ENCODE measurements at regions of chr6 and their contacts with region 1.

Region 1: GRCh38 chr6:132279592-132280139 is 121.6 kb downstream of the MOXD1 start:
- DNase-seq: peak; percentile 77
- H3K4me3 Mint-ChIP-seq: peak overlapping the region; percentile 71
- H3K27ac Mint-ChIP-seq: no peak overlapping the region
- H3K4me1 Mint-ChIP-seq: no peaks in the 10 kb centered on the region
- H3K27me3 Mint-ChIP-seq: no peaks in the 10 kb centered on the region
- CTCF ChIP-seq: peak; percentile 76

Region 2: DNA sequence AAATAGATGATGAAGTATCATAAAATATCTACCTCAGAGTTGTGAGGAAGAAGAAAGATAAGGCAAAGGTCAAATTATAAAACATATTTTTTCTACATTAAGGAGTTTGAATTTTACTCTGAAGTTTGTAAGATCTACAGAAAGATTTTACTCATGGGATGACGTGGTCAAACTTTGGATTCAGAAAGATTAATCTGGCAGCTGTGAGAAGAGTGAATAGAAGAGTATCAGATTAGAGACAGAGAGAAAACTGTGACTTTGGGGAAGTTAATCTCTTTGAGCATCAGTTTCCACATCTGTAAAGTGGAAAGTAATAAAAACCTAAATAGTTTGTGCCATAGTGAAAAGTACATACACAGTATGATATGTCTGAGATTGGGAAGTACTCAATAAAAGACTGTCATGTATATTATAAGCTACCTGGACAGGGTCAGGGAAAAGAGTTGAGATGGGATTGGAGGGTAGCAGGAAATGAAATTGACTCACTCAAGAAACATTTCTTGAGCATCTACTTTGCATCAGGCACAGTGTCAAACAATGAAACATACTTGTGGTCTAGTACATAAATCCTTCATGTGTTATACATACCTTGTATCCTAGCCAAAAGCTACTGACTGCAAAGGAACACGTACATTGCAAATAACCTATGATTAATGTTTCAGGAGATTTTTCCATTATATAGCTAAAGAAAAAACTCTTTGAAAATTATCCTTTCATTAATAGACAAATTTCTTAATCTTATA is 1691.7 kb before region 1 on chr6:
- CTCF ChIA-PET with region 1: no interaction called
- POLR2A ChIA-PET with region 1: no interaction called
- intact Hi-C with region 1: no loop called
- DNase-seq: peak; percentile 54
- H3K4me3 Mint-ChIP-seq: no peak overlapping the region
- H3K27ac Mint-ChIP-seq: no peak overlapping the region
- H3K4me1 Mint-ChIP-seq: peaks cover 4% of the 10 kb centered on the region
- H3K27me3 Mint-ChIP-seq: no peaks in the 10 kb centered on the region
- CTCF ChIP-seq: no peak

Region 3: DNA sequence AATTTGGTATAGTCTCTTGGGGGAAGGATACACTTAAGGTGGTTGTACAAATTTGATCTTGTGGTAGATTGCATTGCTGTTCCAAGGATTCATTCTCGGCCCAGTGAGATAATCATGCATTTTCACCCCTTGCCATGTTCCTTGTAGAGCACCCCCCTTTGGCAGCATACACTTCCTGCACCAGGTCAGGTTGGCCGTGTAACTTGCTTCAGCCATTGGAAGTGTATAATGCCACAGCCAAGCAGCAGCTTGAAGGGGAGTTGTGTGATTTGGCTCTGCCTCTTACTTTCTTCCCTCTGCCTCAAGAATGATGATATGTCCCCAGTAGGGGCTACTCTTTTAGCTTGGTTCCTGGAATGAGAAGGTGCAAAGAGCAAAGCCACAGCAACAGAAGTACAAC is 350.4 kb before region 1 on chr6:
- CTCF ChIA-PET with region 1: interaction called, 31 read pairs
- POLR2A ChIA-PET with region 1: interaction called, 3 read pairs
- intact Hi-C with region 1: loop called (anchors 1 kb)
- DNase-seq: no peak
- H3K4me3 Mint-ChIP-seq: no peak overlapping the region
- H3K27ac Mint-ChIP-seq: no peak overlapping the region
- H3K4me1 Mint-ChIP-seq: peaks cover 6% of the 10 kb centered on the region
- H3K27me3 Mint-ChIP-seq: no peaks in the 10 kb centered on the region
- CTCF ChIP-seq: no peak

Region 4: DNA sequence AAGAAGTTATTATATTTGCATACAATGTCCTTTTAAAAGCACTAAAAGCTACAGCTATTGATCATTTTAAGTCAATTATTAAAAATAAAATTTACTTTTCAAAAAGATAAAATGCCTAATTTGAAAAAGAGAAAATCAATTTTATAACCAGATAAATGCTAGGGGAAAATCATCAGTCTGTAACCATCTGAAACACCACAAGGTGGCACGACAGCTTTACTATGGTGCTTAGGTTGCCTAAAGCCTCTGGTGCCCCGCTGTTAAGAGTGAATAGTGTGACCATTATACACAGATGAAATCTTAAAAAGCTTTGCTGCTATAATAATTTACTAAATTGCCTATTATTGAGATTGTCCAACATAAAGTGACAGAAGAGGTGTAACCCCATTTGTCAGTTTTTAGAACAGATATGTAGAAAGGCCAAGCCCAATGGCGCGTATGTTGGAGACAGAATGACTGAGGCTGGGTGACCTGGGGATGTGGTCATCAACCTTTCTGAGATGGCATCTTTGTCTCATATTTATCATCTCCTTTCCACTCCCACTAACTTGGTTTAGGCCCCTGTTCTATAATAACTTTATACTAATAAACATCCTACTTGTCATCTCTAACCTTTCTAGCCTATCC is 20.8 kb after region 1 on chr6:
- CTCF ChIA-PET with region 1: interaction called, 357 read pairs
- POLR2A ChIA-PET with region 1: interaction called, 9 read pairs
- intact Hi-C with region 1: loop called (anchors 1 kb)
- DNase-seq: peak; percentile 70
- H3K4me3 Mint-ChIP-seq: no peak overlapping the region
- H3K27ac Mint-ChIP-seq: no peak overlapping the region
- H3K4me1 Mint-ChIP-seq: no peaks in the 10 kb centered on the region
- H3K27me3 Mint-ChIP-seq: no peaks in the 10 kb centered on the region
- CTCF ChIP-seq: peak; percentile 74

Region 5: DNA sequence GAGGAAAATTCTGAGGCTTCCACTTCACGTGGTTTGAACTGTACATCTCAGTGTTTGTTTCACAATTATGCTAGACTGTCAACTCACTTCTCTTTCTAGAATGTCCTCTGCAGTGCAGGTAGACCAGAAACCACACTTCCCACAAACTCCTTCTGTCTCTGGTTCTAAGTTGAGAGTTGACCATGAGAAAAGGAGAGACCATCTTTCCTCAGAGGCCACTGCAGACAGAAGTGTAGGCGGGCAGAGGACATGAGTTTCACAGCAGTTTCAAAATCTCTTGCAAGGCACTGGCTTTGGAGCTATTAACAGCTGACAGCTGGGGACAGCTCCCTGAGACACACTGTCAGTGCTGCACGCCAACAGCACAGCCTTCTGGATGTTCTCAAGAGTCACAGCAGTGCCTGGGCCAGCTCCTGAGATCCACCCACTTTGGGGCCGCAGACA is 177.1 kb after region 1 on chr6:
- CTCF ChIA-PET with region 1: interaction called, 16 read pairs
- POLR2A ChIA-PET with region 1: no interaction called
- intact Hi-C with region 1: no loop called
- DNase-seq: no peak
- H3K4me3 Mint-ChIP-seq: no peak overlapping the region
- H3K27ac Mint-ChIP-seq: no peak overlapping the region
- H3K4me1 Mint-ChIP-seq: no peaks in the 10 kb centered on the region
- H3K27me3 Mint-ChIP-seq: no peaks in the 10 kb centered on the region
- CTCF ChIP-seq: no peak

Region 6: DNA sequence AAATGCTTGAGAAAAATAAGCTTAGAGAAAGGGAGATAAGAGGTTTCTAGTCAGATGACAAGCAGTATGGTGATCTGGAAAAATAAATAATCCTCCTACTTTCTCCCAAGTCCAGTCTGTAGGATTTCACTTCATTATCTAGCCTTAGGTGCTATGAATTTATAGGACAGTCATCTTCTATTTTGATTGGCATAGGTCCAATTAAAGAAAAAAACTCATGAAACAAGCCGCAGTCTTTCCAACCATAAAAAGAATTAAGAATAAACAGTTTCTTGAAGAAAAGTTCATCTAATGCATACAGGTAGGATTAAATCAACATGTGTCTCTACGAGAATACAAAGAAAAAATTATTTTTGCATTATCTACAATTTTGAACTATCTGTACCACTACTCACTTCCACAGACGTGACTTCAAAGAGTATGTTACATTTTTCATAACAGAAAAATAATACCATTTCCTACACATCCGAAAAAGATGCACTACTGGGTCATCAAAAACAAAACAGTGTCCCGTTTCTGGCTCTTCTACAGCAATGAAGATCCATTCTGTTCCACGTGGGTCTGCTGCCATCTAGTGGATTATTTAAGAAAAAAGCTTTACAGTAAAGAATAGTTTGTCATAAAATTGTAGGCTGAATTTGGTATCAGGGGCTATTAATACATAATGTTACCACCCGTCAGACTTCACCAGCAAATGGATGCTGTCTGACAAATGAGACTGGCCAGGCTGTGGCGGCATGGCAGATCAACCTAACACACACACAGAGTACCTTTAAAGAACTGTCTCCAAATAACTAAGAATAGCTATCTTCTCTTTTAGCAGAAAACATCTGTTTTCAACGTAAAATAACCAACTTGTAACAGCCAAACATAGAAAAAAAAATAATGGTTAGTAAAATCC is 204.4 kb after region 1 on chr6:
- CTCF ChIA-PET with region 1: interaction called, 119 read pairs
- POLR2A ChIA-PET with region 1: interaction called, 5 read pairs
- intact Hi-C with region 1: loop called (anchors 1 kb)
- DNase-seq: peak; percentile 80
- H3K4me3 Mint-ChIP-seq: no peak overlapping the region
- H3K27ac Mint-ChIP-seq: no peak overlapping the region
- H3K4me1 Mint-ChIP-seq: peaks cover 8% of the 10 kb centered on the region
- H3K27me3 Mint-ChIP-seq: no peaks in the 10 kb centered on the region
- CTCF ChIP-seq: peak; percentile 67